Heart right ventricle (tissue), 16 donors: ENCODE measurements at regions of chr4 and their contacts with region 1.

Region 1: DNA sequence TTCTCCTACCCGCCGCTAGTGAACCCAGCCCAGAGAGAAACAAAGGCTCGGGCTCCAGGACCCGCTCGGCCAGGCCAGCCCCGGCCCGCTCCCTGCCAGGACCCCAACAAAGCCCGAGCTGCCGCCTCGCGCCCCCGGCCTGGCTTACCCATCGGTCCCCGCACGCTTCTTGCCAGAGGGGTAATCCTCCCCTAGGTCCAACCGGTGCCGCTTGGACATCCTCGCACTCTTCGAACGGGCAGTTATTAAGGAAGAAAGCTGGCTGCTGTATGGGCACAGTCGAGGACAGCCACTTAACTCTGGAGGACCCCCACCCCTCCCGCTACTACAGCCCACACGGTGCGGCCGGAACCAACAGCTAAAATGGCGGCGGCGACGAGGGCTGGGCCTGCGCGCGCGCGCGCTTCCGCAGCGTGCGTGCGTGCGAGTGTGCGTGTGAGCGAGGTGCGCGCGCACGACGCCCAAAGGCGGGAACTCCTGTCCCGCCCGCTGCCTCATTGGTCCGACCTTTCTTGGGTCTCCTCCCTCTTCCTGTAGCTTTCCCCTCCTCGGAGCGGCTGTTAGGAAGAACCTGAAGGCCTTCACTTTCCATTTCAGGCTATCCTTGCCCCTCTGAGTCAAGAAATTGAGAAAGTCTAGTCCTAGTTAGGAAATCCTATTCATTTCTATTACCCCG is at the start of gene DHX15:
- DNase-seq: peak; percentile 95
- ATAC-seq: peak; percentile 96 to 99 (median 98)
- H3K4me3 ChIP-seq: peak within 1 kb of the TSS; percentile 70 to 100 (median 94)
- H3K27ac ChIP-seq: peak within 1 kb of the TSS; percentile 92 to 99 (median 98)
- H3K4me1 ChIP-seq: peaks cover 0 to 53% (median 42%) of the 10 kb centered on the region in 9 donors
- H3K27me3 ChIP-seq: no peaks in the 10 kb centered on the region
- CTCF ChIP-seq: no peak
- total RNA-seq, gene DHX15: 42.5 to 69.6 (median 48.0) TPM

Region 2: GRCh38 chr4:24472514-24473308 is 111.6 kb before region 1 on chr4:
- intact Hi-C with region 1: loop called in 1 of 10 experiments (anchors 5 kb)
- DNase-seq: peak; percentile 80 to 83
- ATAC-seq: peak; percentile 84 to 94 (median 88)
- H3K4me3 ChIP-seq: peak overlapping the region; percentile 52 to 79 (median 68)
- H3K27ac ChIP-seq: peak overlapping the region in 9 of 10 donors; percentile 8 to 73 (median 58)
- H3K4me1 ChIP-seq: peaks cover 0 to 38% (median 22%) of the 10 kb centered on the region in 9 donors
- H3K27me3 ChIP-seq: peaks cover 0 to 70% (median 19%) of the 10 kb centered on the region in 7 donors
- CTCF ChIP-seq: peak; percentile 52 to 74 (median 65)

Region 3: DNA sequence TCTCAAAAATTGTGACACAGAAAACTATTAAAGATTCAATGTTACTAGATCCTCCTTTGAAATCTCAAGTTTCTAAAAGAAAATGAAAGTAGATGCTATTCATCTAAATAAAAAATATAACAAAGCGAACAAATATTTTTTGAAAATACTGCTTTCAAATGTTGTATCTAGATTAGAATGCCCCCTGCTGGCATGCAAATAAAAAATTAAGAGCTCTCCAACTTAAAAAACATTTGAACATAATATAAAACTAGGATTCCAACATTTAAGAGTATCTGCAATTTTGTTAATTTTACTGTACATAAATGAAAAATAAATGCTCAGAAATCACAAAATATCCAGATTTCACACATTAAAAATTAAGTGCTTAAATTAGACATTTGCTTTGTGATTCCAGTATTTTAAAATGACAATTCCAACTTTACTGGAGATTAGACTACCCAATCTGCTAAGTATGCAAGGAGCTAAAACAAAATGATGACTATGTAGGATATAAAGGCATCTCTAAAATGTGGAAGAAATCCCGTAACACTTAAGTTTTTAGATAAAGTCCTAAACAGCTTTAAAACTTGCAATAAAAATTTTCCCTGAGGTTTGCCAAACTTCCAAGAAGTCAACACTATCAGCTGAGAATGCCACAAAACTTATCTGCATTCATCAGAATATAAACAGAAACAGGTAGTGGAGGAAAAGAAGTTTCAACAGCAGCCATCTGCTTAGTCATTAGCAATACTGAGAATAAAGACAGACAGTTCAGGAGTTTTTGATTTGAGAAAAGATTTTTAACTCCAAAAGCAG is 32.6 kb before region 1 on chr4:
- intact Hi-C with region 1: no loop called
- DNase-seq: no peak
- ATAC-seq: no peak
- H3K4me3 ChIP-seq: no peak overlapping the region
- H3K27ac ChIP-seq: peak overlapping the region in 1 of 10 donors; percentile 1
- H3K4me1 ChIP-seq: peaks cover 0 to 53% (median 33%) of the 10 kb centered on the region in 9 donors
- H3K27me3 ChIP-seq: no peaks in the 10 kb centered on the region
- CTCF ChIP-seq: peak in 7 of 9 donors; percentile 23 to 57 (median 47)

Region 4: GRCh38 chr4:24794916-24795665 is 210.8 kb after region 1 on chr4 and contains the start of gene SOD3:
- intact Hi-C with region 1: loop called in 4 of 10 experiments (anchors 5 to 10 kb)
- DNase-seq: peak; percentile 80 to 88
- ATAC-seq: peak; percentile 93 to 98 (median 96)
- H3K4me3 ChIP-seq: peak within 1 kb of the TSS in 9 of 10 donors; percentile 22 to 54 (median 48)
- H3K27ac ChIP-seq: peak within 1 kb of the TSS; percentile 39 to 90 (median 85)
- H3K4me1 ChIP-seq: peaks cover 2 to 36% (median 17%) of the 10 kb centered on the region in 9 donors
- H3K27me3 ChIP-seq: peaks cover 0 to 18% (median 9%) of the 10 kb centered on the region in 7 donors
- CTCF ChIP-seq: no peak
- total RNA-seq, gene SOD3: 30.3 to 118 (median 56.2) TPM

Region 5: DNA sequence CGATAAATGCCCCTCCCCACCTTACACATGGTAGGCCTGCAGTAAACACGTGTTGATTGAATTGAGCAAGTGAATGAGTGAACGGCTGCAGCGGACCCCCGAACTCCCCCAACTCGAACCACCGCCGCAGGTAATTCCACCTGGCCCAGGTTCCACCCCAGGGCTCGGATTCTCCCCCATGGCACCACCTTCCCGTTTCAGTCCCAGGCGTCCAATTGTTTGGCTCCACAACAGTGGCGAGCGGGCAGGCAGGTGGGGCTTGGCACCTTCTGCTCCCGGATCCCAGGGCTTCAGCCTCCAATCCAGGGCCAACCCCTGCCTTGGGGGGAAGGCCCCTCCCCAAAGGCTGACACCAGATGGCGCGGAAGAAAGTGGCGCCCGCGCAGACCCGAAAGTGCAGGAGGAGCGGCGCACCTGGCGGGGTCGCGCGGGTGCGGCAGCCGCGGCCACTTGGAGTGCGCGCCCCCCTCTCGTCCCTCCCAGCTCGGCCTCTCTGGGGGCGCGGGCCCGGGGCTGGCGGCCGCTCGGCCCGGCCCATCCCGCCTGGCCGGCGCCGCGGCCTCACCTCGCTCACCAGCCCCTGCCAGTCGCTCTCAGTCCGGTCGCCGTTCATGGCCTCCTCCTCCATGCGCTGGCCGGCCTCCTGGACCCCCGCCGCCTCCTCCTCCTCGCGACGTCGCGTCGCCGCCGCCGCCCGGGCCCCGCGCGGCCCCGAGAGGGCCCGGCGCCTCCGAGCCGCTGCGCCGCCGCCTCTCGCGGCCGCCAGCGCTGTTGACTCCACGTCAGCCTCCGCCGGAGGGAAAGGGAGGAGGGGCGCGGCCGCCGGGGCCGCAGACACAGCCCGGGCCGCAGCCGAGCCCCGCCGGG is 328.2 kb after region 1 on chr4 and contains the start of gene CCDC149:
- intact Hi-C with region 1: loop called in 2 of 10 experiments (anchors 5 to 10 kb)
- DNase-seq: peak; percentile 70 to 76
- ATAC-seq: peak; percentile 84 to 93 (median 90)
- H3K4me3 ChIP-seq: peak within 1 kb of the TSS; percentile 37 to 74 (median 67)
- H3K27ac ChIP-seq: peak within 1 kb of the TSS; percentile 87 to 97 (median 92)
- H3K4me1 ChIP-seq: peaks cover 2 to 21% (median 7%) of the 10 kb centered on the region in 9 donors
- H3K27me3 ChIP-seq: no peaks in the 10 kb centered on the region
- CTCF ChIP-seq: peak in 5 of 9 donors; percentile 7 to 38 (median 19)
- total RNA-seq, gene CCDC149: 8.0 to 17.7 (median 9.3) TPM

Region 6: GRCh38 chr4:25159884-25160713 is 575.8 kb after region 1 on chr4 and contains the start of gene SEPSECS:
- intact Hi-C with region 1: loop called in 1 of 10 experiments (anchors 10 kb)
- DNase-seq: peak; percentile 96 to 99
- ATAC-seq: peak; percentile 94 to 97 (median 96)
- H3K4me3 ChIP-seq: peak within 1 kb of the TSS; percentile 57 to 99 (median 82)
- H3K27ac ChIP-seq: peak within 1 kb of the TSS; percentile 79 to 99 (median 94)
- H3K4me1 ChIP-seq: peaks cover 0 to 37% (median 19%) of the 10 kb centered on the region in 9 donors
- H3K27me3 ChIP-seq: no peaks in the 10 kb centered on the region
- CTCF ChIP-seq: no peak
- total RNA-seq, gene SEPSECS: 2.9 to 9.1 (median 6.2) TPM